SK-N-SH (cell line): ENCODE measurements at regions of chr1 and their contacts with region 1.

Region 1: GRCh38 chr1:230109895-230110667 is 43.0 kb downstream of the GALNT2 start:
- DNase-seq: peak; percentile 60
- H3K4me3 ChIP-seq: no peak overlapping the region
- H3K27ac ChIP-seq: peak overlapping the region in 1 of 2 experiments; percentile 2; a peak in 1 of 4 replicates
- H3K4me1 ChIP-seq: peaks cover 39 to 69% of the 10 kb centered on the region in 2 experiments
- H3K27me3 ChIP-seq: no peaks in the 10 kb centered on the region
- CTCF ChIP-seq: no peak
- EP300 ChIP-seq: no peak
- RAD21 ChIP-seq: peak; percentile 52

Region 2: DNA sequence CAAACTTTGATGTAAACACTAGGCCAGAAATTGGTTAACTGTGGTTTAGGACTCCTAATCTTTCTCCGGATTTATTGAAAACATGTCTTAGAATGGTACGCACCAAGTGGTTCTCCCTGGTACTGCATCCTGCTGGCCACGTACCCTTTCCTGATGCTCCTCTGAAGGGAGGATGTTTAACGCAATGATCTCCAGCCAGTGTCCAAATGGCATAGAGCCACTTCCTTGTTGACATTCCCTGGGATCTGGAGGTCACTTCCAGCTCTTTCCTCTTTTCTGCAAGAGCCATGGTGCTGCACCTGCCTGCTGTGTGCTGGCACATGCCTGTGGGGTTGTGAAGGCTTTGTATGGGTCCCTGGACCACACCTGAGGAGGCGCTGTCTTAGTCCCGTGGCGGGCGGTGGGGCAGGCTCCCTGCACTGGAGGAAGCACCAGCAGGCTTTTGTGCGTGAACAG is 10.9 kb after region 1 on chr1:
- CTCF ChIA-PET with region 1: interaction called, 10 read pairs
- POLR2A ChIA-PET with region 1: no interaction called
- DNase-seq: peak; percentile 58
- H3K4me3 ChIP-seq: no peak overlapping the region
- H3K27ac ChIP-seq: no peak overlapping the region
- H3K4me1 ChIP-seq: peaks cover 12 to 19% of the 10 kb centered on the region in 2 experiments; a peak in 2 of 4 replicates
- H3K27me3 ChIP-seq: no peaks in the 10 kb centered on the region
- CTCF ChIP-seq: peak; percentile 60
- EP300 ChIP-seq: no peak
- RAD21 ChIP-seq: peak; percentile 33

Region 3: GRCh38 chr1:230149751-230150584 is 39.9 kb after region 1 on chr1:
- CTCF ChIA-PET with region 1: no interaction called
- POLR2A ChIA-PET with region 1: no interaction called
- DNase-seq: no peak
- H3K4me3 ChIP-seq: no peak overlapping the region
- H3K27ac ChIP-seq: no peak overlapping the region
- H3K4me1 ChIP-seq: peaks cover 4 to 32% of the 10 kb centered on the region in 2 experiments; a peak in 2 of 4 replicates
- H3K27me3 ChIP-seq: no peaks in the 10 kb centered on the region
- CTCF ChIP-seq: no peak
- EP300 ChIP-seq: no peak
- RAD21 ChIP-seq: no peak

Region 4: GRCh38 chr1:230251644-230252191 is 141.6 kb after region 1 on chr1:
- CTCF ChIA-PET with region 1: no interaction called
- POLR2A ChIA-PET with region 1: no interaction called
- DNase-seq: no peak
- H3K4me3 ChIP-seq: no peak overlapping the region
- H3K27ac ChIP-seq: no peak overlapping the region
- H3K4me1 ChIP-seq: no peaks in the 10 kb centered on the region
- H3K27me3 ChIP-seq: no peaks in the 10 kb centered on the region
- CTCF ChIP-seq: no peak
- EP300 ChIP-seq: no peak
- RAD21 ChIP-seq: no peak